ENCODE measurements at regions of chr5 and their contacts with region 1.

Region 1: DNA sequence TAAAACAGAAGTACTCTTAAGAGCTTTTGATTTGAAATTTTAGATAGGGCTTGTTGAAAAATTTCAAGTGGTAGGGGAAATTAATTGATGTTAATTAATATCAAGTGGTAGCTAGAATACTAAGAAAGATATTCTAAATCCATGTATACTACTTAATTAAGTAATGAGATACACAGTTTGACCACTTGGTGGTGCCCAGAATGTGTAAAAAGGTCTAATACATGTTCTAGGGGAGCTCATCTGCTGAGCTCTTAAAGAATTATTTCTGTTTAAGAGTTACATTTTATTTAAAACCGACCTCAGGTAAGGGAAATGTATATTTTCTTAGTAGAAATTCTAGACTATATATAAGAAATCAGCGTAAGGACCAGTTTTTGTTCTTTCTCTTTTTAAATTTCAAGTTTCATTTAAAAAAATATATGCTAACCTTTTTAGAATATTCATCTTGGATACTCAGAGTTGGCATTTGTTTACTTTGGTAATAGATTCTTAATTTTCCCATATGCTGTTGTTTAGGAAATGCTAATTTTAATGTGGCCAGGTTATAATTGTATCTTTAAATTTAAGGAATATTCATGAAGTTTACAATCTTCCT is 61.5 kb downstream of the LNPEP start:
- DNase-seq: peak; percentile 8 to 64
- ATAC-seq: peak; percentile 70 to 87; a peak in 4 of 6 replicates
- H3K4me3 ChIP-seq: no peak overlapping the region
- H3K27ac ChIP-seq: no peak overlapping the region
- H3K4me1 ChIP-seq: no peaks in the 10 kb centered on the region
- CTCF ChIP-seq: peak; percentile 58
- EP300 ChIP-seq: no peak
- POLR2A ChIP-seq: no peak
- RAD21 ChIP-seq: peak; percentile 50 to 56

Region 2: DNA sequence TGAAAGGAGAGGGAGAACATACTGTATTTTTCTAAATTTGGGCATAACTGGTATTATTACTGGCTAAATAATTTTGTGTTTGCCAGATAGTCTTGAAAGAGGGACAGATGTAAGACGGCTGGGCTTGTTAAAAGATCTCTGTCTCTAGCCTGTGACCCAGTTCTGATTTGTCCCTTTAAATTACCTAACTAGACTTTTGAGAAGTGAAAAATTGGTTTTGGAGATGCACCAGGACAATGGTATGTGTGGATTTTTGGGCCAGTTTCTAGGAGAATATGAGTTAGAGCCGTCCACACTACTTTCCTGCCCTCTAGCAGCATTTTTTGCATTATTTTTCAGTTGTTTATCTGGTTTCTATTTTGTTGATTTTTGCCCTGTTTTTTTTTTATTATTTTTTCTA is 28.0 kb before region 1 on chr5:
- CTCF ChIA-PET with region 1: no interaction called
- POLR2A ChIA-PET with region 1: no interaction called
- DNase-seq: no peak
- ATAC-seq: no peak
- H3K4me3 ChIP-seq: no peak overlapping the region
- H3K27ac ChIP-seq: no peak overlapping the region
- H3K4me1 ChIP-seq: peaks cover 20% of the 10 kb centered on the region
- CTCF ChIP-seq: no peak
- EP300 ChIP-seq: no peak
- POLR2A ChIP-seq: no peak
- RAD21 ChIP-seq: no peak

Region 3: GRCh38 chr5:97142521-97143254 is 145.3 kb after region 1 on chr5 and contains the start of gene LIX1:
- CTCF ChIA-PET with region 1: interaction called, 18 read pairs
- POLR2A ChIA-PET with region 1: interaction called, 3 read pairs
- DNase-seq: peak; percentile 29 to 39
- ATAC-seq: peak; percentile 94 to 96
- H3K4me3 ChIP-seq: no peak within 1 kb of the TSS
- H3K27ac ChIP-seq: no peak within 1 kb of the TSS
- H3K4me1 ChIP-seq: no peaks in the 10 kb centered on the region
- CTCF ChIP-seq: peak; percentile 62
- EP300 ChIP-seq: no peak
- POLR2A ChIP-seq: no peak
- RAD21 ChIP-seq: peak; percentile 78 to 79
- polyA plus RNA-seq, gene LIX1: not detected in 2 replicates

Measured in A549 (cell line).